ENCODE measurements at regions of chr12 and their contacts with region 1.

Region 1: DNA sequence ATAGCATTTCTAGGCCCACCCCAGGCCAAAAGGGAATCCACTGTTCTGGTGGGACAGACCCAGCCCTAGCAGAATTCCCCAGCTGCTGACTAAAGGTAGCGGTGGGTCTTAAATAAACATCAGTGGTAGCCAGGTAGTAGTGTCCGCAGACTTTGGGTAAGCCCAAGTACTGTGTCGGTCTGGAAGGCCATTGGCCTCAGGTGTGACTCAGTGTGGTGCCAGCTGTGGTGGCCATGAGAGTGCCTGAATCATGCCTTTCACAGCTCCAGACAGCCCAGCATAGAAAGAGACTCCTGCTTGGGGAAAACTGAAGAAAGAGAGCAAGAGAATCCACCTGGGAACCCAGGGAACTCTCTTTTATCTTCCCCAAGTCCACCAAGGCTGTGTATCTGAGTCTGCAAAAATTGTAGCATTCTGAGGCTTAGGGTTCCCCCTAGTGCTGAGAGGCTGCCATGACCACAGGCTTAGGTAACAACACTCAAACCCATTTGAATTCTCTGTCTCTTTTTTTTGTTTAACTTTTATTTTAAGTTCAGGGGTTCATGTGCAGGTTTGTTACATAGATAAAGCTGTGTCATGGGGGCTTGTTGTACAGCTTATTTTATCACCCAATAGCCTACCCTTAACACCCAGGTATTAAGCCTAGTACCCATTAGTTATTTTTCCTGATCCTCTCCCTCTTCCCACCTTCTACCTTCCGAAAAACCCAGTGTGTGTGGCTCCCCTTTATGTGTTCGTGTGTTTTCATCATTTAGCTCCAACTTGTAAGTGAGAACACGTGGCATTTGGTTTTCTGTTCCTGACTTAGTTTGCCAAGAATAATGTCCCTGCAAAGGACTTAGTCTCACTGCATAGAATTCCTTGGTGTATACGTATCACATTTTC is 16.7 kb upstream of the CD163L1 start:
- DNase-seq: peak; percentile 67
- H3K4me3 Mint-ChIP-seq: no peak overlapping the region
- H3K27ac Mint-ChIP-seq: no peak overlapping the region
- H3K4me1 Mint-ChIP-seq: no peaks in the 10 kb centered on the region
- H3K27me3 Mint-ChIP-seq: peaks cover 3% of the 10 kb centered on the region

Region 2: GRCh38 chr12:7219599-7220243 is 240.9 kb before region 1 on chr12:
- CTCF ChIA-PET with region 1: interaction called, 23 read pairs
- POLR2A ChIA-PET with region 1: no interaction called
- intact Hi-C with region 1: loop called (anchors 1 kb)
- DNase-seq: peak; percentile 77
- H3K4me3 Mint-ChIP-seq: no peak overlapping the region
- H3K27ac Mint-ChIP-seq: no peak overlapping the region
- H3K4me1 Mint-ChIP-seq: no peaks in the 10 kb centered on the region
- H3K27me3 Mint-ChIP-seq: no peaks in the 10 kb centered on the region

Region 3: GRCh38 chr12:7374423-7375144 is 86.0 kb before region 1 on chr12:
- CTCF ChIA-PET with region 1: interaction called, 4 read pairs
- POLR2A ChIA-PET with region 1: no interaction called
- intact Hi-C with region 1: loop called (anchors 5 kb)
- DNase-seq: peak; percentile 45
- H3K4me3 Mint-ChIP-seq: no peak overlapping the region
- H3K27ac Mint-ChIP-seq: no peak overlapping the region
- H3K4me1 Mint-ChIP-seq: no peaks in the 10 kb centered on the region
- H3K27me3 Mint-ChIP-seq: peaks cover 9% of the 10 kb centered on the region

Region 4: DNA sequence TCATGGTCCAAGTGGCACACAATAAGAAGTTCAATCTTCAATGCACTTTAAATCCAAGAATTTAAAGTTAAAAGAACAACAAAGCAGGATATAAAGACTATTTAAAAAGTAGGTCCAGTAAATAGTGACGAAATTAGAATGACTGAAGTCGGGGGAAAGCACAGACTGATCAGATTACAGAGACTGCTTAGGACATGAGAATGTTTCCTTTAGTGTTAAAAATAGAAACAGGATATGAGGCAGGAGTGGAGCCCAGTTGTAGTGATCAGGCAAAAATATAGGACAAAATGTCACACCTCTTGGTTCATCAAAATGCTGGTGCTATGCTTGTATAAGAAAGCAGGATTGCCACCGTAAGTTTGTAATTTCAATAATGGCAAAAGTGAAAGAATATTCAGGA is 95.1 kb after region 1 on chr12:
- CTCF ChIA-PET with region 1: no interaction called
- POLR2A ChIA-PET with region 1: no interaction called
- intact Hi-C with region 1: no loop called
- DNase-seq: no peak
- H3K4me3 Mint-ChIP-seq: no peak overlapping the region
- H3K27ac Mint-ChIP-seq: no peak overlapping the region
- H3K4me1 Mint-ChIP-seq: no peaks in the 10 kb centered on the region
- H3K27me3 Mint-ChIP-seq: peaks cover 16% of the 10 kb centered on the region